AG04449 (cell line): ENCODE measurements at regions of chr3 and their contacts with region 1.

Region 1: GRCh38 chr3:159616212-159616825 is 372.3 kb upstream of the IL12A start:
- DNase-seq: no peak
- H3K4me3 ChIP-seq: no peak overlapping the region
- CTCF ChIP-seq: peak; percentile 65

Region 2: GRCh38 chr3:159634483-159634882 is 18.2 kb after region 1 on chr3:
- CTCF ChIA-PET with region 1: interaction called, 37 read pairs
- POLR2A ChIA-PET with region 1: no interaction called
- DNase-seq: no peak
- H3K4me3 ChIP-seq: no peak overlapping the region
- CTCF ChIP-seq: no peak

Region 3: GRCh38 chr3:159664009-159664408 is 47.7 kb after region 1 on chr3:
- CTCF ChIA-PET with region 1: no interaction called
- POLR2A ChIA-PET with region 1: no interaction called
- DNase-seq: no peak
- H3K4me3 ChIP-seq: no peak overlapping the region
- CTCF ChIP-seq: no peak

Region 4: GRCh38 chr3:159897331-159898075 is 281.2 kb after region 1 on chr3:
- CTCF ChIA-PET with region 1: no interaction called
- POLR2A ChIA-PET with region 1: no interaction called
- DNase-seq: no peak
- H3K4me3 ChIP-seq: no peak overlapping the region
- CTCF ChIP-seq: no peak

Region 5: DNA sequence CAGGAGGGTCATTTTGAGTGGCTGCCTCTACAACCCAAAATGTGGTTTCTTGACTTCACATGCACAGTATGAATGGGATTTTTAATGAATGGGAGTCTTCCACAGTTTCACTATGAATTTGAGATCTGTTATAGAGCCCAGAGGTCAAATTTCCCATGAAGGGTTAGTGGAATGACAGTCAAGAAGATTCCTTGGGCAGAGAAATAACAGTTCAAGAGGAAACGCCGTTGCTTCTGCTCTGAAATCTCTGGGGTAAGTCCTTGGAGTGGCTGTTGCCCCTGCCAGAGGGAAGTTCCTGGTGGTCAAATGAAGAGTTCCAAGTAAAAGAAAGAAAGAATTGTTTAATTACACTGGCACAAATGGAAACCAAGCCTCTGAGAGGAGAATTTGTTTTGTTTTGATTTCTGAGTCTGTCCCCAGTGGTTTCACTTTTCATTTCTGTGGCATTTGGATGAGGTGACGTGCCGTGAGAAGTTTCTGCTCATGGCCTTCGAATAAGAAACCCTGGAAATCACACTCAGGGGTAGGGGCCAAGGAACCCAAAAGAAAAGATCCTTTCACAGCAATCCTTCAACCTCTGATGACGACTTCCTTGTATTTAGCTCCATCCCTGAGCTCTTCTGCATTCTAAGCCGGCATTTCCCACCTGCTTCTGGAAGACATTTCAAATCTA is 294.8 kb after region 1 on chr3:
- CTCF ChIA-PET with region 1: no interaction called
- POLR2A ChIA-PET with region 1: no interaction called
- DNase-seq: no peak
- H3K4me3 ChIP-seq: no peak overlapping the region
- CTCF ChIP-seq: no peak